PC-9 (cell line): ENCODE measurements at regions of chr19 and their contacts with region 1.

Region 1: DNA sequence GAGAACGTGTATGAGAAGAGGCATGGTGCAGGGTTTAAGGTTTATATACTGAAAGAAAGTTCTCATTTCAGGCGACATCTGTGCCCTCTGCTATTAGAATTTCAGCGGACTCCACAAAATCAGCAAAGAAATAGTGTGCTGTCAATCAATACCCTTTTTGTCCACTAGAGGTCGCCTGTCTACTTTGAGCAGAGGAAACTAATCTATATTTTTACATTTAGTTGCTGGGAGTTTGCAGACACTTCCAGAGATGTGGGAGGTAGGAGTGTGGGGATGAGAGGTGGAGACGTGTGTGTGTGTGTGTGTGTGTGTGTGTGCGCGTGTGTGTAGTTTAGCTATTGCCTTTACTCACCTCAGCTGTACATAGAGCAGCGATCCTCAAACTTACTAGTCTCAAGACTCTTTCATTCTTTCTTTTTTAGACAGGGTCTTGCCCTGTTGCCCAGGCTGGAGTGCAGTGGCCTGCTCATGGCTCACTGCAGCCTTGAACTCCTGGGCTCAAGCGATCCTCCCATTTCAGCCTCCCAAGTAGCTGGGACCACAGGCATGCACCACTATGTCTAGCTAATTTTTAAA is 9.7 kb downstream of the INAFM1 start:
- DNase-seq: peak; percentile 41 to 56
- H3K4me3 ChIP-seq: no peak overlapping the region
- H3K27ac ChIP-seq: no peak overlapping the region
- H3K4me1 ChIP-seq: peaks cover 29% of the 10 kb centered on the region
- H3K27me3 ChIP-seq: no peaks in the 10 kb centered on the region
- CTCF ChIP-seq: peak; percentile 96

Region 2: DNA sequence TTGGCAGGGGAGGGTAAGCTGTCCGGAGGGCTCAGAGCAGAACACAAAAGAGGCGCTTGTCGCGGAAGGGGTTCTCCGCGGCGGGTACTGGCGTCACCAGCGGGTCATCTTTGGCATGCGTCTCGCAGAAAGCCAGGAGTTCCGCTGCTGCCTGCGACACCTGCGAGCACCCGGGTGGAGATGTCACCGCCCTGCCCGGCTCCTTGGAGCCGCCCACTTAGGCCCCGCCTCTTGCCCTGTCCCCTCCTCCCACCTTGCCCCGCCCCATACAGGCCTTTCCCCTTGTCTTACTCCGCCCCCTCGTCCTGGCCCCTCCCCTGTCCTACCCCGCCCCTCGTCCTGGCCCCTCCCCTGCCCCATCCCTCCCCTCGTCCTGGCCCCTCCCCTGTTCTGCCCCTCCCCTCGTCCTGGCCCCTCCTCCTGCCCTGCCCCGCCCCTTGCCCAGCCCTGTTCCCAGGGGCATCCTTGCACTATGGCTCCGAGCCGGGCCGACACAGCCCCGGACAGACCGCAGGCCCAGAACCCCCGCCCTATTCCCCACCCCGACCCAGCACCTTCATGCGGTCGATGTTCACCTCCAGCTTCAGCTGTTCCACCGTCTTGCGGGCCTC is 650.3 kb before region 1 on chr19:
- CTCF ChIA-PET with region 1: no interaction called
- POLR2A ChIA-PET with region 1: no interaction called
- intact Hi-C with region 1: no loop called
- DNase-seq: peak; percentile 79 to 97
- H3K4me3 ChIP-seq: peak overlapping the region; percentile 53
- H3K27ac ChIP-seq: no peak overlapping the region
- H3K4me1 ChIP-seq: peaks cover 14% of the 10 kb centered on the region
- H3K27me3 ChIP-seq: peaks cover 68% of the 10 kb centered on the region
- CTCF ChIP-seq: no peak

Region 3: GRCh38 chr19:47243776-47244547 is 40.5 kb before region 1 on chr19:
- CTCF ChIA-PET with region 1: no interaction called
- POLR2A ChIA-PET with region 1: no interaction called
- intact Hi-C with region 1: no loop called
- DNase-seq: peak; percentile 86 to 95
- H3K4me3 ChIP-seq: peak overlapping the region; percentile 71
- H3K27ac ChIP-seq: peak overlapping the region; percentile 87
- H3K4me1 ChIP-seq: peaks cover 26% of the 10 kb centered on the region
- H3K27me3 ChIP-seq: no peaks in the 10 kb centered on the region
- CTCF ChIP-seq: peak; percentile 98

Region 4: GRCh38 chr19:47707135-47707925 is 422.9 kb after region 1 on chr19:
- CTCF ChIA-PET with region 1: no interaction called
- POLR2A ChIA-PET with region 1: no interaction called
- intact Hi-C with region 1: loop called (anchors 10 kb)
- DNase-seq: peak; percentile 71 to 82
- H3K4me3 ChIP-seq: no peak overlapping the region
- H3K27ac ChIP-seq: no peak overlapping the region
- H3K4me1 ChIP-seq: no peaks in the 10 kb centered on the region
- H3K27me3 ChIP-seq: no peaks in the 10 kb centered on the region
- CTCF ChIP-seq: peak; percentile 93